ENCODE measurements at regions of chr7 and their contacts with region 1.

Region 1: DNA sequence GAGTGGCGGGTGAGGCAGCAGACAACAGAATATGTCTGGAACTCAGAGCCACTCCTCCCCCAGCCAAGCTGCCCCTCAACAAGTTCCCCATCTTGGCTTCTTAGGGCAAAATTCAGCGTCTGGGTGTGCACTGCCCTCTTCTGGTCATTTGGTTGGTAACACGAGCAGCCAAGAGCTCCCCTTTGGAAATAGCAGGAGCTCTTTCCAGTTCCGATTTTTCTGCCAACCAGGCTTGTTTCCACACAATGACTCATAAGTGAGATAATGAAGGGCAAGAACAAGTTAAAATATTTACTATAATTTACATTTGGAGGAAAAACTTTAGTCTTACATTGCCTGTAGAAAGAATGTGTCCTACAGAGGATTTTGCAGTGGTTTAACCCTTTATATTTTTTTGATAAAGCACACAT is 70.5 kb downstream of the ADCYAP1R1 start:
- DNase-seq: peak; percentile 23 to 85 (median 68)

Region 2: GRCh38 chr7:30800785-30801252 is 321.8 kb before region 1 on chr7:
- intact Hi-C with region 1: loop called (anchors 5 kb)
- DNase-seq: peak in 41 of 42 donors; percentile 11 to 88 (median 69)

Region 3: DNA sequence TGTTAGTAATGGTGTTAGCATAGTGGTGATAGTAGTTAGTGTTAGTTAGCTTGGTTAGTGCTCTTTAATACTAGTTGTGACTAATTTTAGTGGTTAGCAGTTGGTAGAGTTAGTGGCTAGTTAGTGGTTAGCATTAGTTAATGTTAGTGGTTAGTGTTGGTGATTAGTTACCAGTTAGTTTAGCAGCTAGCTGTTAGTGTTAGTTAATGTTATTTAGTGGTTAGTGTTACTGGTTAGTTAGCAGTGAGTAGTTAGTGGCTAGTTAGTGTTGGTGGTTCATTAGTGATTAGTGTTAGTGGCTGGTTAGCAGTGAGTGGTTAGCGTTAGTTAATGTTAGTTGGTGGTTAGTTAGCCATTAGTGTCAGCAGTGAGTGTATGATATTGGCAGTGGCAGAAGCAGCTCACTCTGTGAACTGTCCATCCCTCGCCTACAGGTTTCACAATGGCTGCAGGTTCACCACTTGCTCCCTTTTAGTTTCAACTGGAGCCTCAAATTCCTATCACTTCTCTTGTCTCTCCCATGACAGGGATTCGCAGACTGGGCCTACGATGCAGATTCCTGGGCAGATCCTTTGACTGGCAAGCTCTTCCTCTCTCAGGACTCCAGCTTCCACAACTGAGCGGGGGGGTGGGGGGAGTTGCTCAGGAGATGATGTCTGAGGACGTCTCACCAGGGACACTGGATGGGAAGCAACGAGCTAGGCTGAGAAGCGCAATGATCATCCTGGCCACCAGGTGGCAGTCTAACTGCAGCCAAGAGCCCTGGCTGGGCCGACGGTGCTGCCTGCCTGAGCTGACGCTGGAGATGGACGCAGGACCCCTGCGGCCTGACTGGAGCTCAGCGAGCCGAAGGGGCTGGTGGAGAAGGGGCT is 139.4 kb before region 1 on chr7:
- intact Hi-C with region 1: loop called (anchors 1 kb)
- DNase-seq: peak; percentile 54 to 94 (median 88)

Measured in head of caudate nucleus (tissue), 42 donors.